ENCODE measurements at regions of chr2 and their contacts with region 1.

Region 1: DNA sequence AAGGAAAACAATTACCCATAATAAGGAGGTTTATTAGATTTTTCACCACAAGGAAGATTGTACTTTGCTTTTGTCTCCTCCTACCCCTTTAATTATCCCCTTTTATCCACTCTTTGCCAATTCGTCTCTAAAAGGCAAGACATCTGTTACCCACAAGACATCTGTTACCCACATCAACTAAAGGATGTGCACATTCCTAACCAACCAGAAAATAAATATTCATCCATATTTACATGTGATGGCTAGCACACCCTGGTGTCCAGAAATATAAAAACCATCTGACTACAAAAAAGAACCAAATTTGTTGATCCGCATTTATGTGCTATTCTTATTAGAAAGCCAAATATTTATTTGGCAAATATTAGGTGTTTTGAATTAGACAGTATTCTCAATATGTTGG is 35.7 kb downstream of the ACVR1C start:
- DNase-seq: peak; percentile 57
- ATAC-seq: peak; percentile 40
- H3K4me3 ChIP-seq: no peak overlapping the region
- H3K27ac ChIP-seq: no peak overlapping the region
- H3K4me1 ChIP-seq: no peaks in the 10 kb centered on the region
- H3K27me3 ChIP-seq: peaks cover 50% of the 10 kb centered on the region
- CTCF ChIP-seq: peak; percentile 76

Region 2: DNA sequence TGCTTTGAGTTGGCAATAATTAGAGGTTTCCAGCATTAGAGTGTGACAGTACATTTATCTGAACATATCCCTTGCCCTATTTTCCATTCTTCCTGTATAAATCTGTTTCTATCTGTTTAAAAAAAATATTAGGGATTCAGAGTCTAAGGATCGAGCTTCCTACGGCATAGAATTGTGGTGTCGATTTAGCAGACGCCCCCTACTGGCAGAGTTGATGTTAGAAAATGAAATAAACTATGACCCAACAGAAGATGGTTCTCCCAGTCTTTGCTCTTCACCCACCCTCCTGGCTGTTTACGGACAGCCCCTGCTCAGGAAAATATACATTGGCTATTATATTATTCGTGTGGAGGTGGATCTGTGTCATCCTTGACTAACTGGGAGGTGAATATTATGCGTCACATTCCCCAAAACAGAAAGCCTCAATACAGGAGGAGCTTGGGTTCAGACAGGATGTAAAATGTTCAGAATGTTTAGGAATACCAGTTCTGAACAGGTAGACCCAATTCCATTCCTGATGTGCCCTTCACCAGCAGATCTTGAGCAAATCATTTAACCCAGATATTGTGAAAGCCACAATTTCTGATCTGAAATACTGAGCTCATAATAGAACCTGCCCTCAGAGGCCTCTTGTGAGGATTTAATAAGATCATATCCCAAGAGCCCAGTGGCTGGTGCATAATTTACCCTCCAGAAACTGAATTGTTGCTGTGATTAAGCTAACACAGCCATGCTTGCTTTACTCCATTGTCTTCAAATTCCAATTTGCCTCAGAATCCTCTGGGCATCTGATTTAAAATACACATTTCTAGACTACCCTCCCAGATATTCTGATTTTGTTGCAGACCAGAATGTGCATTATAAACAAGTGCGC is 256.6 kb before region 1 on chr2:
- CTCF ChIA-PET with region 1: no interaction called
- POLR2A ChIA-PET with region 1: no interaction called
- intact Hi-C with region 1: no loop called
- DNase-seq: peak; percentile 67
- ATAC-seq: peak; percentile 75
- H3K4me3 ChIP-seq: no peak overlapping the region
- H3K27ac ChIP-seq: no peak overlapping the region
- H3K4me1 ChIP-seq: no peaks in the 10 kb centered on the region
- H3K27me3 ChIP-seq: no peaks in the 10 kb centered on the region
- CTCF ChIP-seq: peak; percentile 89

Region 3: DNA sequence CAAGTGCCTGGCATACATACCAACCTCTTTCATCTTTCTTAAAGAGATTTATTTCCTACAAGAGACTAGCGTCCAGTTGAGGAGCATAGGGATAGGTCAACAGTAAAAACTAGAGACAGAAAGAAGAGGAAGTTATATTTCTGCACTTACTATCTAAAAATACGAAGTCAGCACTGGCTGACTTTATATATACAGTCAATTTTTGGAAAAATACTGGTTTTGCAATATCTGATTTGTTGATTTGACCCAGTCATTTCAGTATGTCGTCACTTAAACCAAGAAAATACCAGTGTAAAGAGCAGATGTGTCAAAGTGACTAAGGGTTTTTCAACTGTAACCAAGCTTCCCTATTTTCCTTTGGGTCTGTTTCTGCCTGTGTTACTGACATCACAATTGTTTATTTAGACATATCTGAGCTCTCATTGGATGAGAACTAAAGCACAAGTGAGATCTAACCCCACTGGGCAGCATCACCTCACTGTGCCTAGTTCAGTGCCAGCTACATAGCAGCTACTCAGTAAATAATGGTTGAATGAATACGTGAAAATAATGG is 172.1 kb before region 1 on chr2:
- CTCF ChIA-PET with region 1: no interaction called
- POLR2A ChIA-PET with region 1: no interaction called
- intact Hi-C with region 1: no loop called
- DNase-seq: no peak
- ATAC-seq: no peak
- H3K4me3 ChIP-seq: no peak overlapping the region
- H3K27ac ChIP-seq: no peak overlapping the region
- H3K4me1 ChIP-seq: no peaks in the 10 kb centered on the region
- H3K27me3 ChIP-seq: 0 out of 2 replicates have a peak, but pooled peaks cover 7% of the 10 kb centered on the region
- CTCF ChIP-seq: no peak

Region 4: DNA sequence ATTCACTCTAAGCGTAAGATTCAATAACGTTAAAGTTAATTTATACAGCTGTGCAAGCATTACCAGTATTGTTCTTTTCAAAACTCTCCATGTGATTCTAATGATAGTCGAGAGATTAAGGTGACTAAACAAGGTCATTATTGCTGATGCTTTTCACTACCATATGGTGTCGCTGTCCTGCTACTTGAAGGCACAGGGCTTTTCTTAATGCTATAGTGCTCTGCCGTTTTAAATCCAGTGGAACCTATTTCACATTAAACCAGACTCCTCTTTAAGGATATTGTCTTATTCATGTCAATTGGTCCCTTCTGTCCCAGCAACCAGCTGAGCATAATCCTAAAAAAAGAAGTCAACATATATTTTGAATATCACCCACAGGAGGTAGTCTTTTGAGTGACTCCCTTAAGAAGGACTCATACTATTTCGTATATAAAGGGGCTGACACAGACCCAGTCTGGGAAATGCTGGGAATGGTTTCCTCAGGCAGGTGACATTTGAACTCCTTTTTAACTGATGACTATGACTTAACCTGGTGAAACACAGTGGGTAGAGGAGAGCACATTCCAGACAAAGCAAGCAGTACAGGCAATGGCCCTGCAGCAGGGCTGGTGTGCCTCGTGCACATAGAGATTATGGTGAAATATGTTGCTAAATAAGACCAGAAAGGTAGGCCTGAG is 95.2 kb before region 1 on chr2:
- CTCF ChIA-PET with region 1: no interaction called
- POLR2A ChIA-PET with region 1: no interaction called
- intact Hi-C with region 1: loop called (anchors 1 kb)
- DNase-seq: peak; percentile 57
- ATAC-seq: peak; percentile 79
- H3K4me3 ChIP-seq: no peak overlapping the region
- H3K27ac ChIP-seq: no peak overlapping the region
- H3K4me1 ChIP-seq: no peaks in the 10 kb centered on the region
- H3K27me3 ChIP-seq: no peaks in the 10 kb centered on the region
- CTCF ChIP-seq: peak; percentile 87

Region 5: DNA sequence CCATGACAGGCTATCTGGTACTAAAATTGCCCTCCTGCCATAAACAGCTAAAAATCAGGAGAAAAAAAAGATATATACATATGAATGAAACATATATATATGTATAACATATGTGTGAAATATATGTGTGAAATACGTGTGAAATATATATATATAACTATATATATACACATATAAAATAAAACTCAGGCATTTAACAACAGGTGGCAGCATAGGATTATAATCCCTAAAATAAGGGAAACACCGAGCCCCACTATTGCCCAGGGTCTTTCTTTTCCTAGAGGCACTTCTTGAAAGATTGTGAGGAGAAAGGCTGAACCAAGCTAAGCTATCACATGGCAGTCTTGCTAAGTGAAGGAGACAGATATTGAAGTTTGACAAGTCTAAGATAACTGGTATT is 83.2 kb before region 1 on chr2:
- CTCF ChIA-PET with region 1: no interaction called
- POLR2A ChIA-PET with region 1: no interaction called
- intact Hi-C with region 1: loop called (anchors 1 kb)
- DNase-seq: peak; percentile 37
- ATAC-seq: no peak
- H3K4me3 ChIP-seq: no peak overlapping the region
- H3K27ac ChIP-seq: no peak overlapping the region
- H3K4me1 ChIP-seq: no peaks in the 10 kb centered on the region
- H3K27me3 ChIP-seq: 0 out of 2 replicates have a peak, but pooled peaks cover 6% of the 10 kb centered on the region
- CTCF ChIP-seq: peak; percentile 32; the same call in 1 of the 2 replicates

Region 6: DNA sequence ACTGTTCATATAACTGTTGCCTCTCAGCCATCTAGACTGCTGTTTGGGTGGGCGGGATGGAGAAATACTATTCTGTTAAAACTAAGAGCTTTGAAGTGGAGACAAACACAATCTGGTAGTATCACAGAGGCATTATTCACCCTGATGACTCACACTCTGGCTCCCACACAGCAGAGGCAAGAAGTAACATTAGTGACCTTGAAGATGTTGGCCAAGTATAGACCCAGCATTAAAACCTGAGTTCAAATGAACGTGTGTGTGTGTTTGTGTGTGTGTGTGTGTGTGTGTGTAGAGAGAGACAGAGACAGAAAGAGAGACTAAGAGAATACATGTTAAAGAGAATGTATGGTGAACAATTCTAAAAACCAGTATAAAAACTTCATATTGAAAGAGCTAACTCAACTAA is 305.6 kb after region 1 on chr2:
- CTCF ChIA-PET with region 1: no interaction called
- POLR2A ChIA-PET with region 1: no interaction called
- intact Hi-C with region 1: no loop called
- DNase-seq: peak; percentile 69
- ATAC-seq: peak; percentile 77
- H3K4me3 ChIP-seq: no peak overlapping the region
- H3K27ac ChIP-seq: no peak overlapping the region
- H3K4me1 ChIP-seq: peaks cover 24% of the 10 kb centered on the region
- H3K27me3 ChIP-seq: no peaks in the 10 kb centered on the region
- CTCF ChIP-seq: no peak